B cell (primary cell): ENCODE measurements at regions of chr2 and their contacts with region 1.

Region 1: DNA sequence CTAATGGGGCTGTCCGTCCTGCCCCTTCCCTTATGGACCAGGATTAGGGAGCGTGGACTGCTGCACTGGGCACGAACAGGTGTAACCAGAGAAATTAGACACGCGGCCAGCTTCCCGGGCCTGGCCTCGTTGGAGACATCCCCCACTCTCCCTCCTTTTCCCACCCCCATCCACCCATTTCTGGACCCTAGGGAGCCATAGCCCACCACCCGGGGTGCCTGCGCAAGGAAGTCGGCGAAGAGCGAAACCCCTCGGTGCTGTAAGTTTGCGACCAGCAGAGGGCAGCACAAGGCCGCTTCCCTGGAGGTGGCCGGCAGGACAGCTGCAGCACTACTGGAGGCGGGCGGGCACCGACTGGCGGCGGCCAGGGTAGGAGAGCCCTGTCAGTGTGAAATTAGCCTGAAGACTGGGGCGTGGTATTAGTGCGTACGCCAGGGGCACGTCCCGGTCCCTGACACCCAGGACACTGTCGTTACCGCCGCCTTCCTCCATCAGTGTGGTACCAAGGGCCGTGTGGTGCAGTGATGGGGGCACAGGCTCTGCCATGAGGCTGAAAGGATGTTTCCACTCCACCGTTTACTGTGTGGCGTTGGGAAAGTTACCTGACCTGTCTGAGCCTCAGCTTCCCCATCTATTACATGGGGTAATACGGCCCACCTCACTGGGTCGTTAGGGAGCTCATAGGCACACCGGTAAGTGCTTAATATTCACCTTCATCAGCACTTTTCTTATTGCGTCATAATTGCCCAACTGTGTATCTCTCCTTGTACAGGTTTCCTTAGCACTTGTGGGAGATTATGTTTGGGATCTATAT is 36.0 kb upstream of the CD207 start:
- DNase-seq: peak; percentile 77
- ATAC-seq: peak; percentile 75
- H3K4me3 ChIP-seq: no peak overlapping the region
- H3K4me3 Mint-ChIP-seq: no peak overlapping the region
- H3K27ac ChIP-seq: no peak overlapping the region
- H3K27ac Mint-ChIP-seq: no peak overlapping the region
- H3K4me1 ChIP-seq: peaks cover 8 to 13% of the 10 kb centered on the region in 2 donors
- H3K4me1 Mint-ChIP-seq: peaks cover 6% of the 10 kb centered on the region
- H3K27me3 ChIP-seq: peaks cover 0 to 61% (median 19%) of the 10 kb centered on the region in 4 experiments
- H3K27me3 Mint-ChIP-seq: peaks cover 50% of the 10 kb centered on the region
- CTCF ChIP-seq: peak; percentile 79

Region 2: DNA sequence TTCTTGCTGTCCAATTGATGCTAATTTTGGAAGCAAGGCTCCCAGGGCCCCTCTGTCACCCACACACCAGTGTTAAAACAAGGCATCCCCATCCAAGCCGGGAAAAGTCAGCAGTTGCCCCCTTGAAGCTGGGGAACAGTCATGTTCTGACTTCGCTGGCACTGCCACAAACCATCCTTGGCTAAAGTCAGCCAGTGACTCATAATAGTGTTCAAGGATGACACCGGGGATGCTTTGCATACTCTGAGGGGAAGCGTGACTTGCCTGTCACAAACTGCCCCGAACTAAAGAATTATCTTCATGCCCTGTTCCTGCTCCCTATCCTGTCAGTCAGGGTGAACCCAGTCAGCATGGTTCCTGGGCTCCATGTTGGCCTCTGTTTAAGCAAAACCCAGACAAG is 355.0 kb before region 1 on chr2:
- CTCF ChIA-PET with region 1: no interaction called
- POLR2A ChIA-PET with region 1: no interaction called
- intact Hi-C with region 1: no loop called
- DNase-seq: peak; percentile 27
- ATAC-seq: peak; percentile 71
- H3K4me3 ChIP-seq: no peak overlapping the region
- H3K4me3 Mint-ChIP-seq: peak overlapping the region; percentile 55
- H3K27ac ChIP-seq: no peak overlapping the region
- H3K27ac Mint-ChIP-seq: no peak overlapping the region
- H3K4me1 ChIP-seq: peaks cover 0 to 13% of the 10 kb centered on the region in 2 donors
- H3K4me1 Mint-ChIP-seq: peaks cover 17% of the 10 kb centered on the region
- H3K27me3 ChIP-seq: no peaks in the 10 kb centered on the region
- H3K27me3 Mint-ChIP-seq: no peaks in the 10 kb centered on the region
- CTCF ChIP-seq: no peak

Region 3: DNA sequence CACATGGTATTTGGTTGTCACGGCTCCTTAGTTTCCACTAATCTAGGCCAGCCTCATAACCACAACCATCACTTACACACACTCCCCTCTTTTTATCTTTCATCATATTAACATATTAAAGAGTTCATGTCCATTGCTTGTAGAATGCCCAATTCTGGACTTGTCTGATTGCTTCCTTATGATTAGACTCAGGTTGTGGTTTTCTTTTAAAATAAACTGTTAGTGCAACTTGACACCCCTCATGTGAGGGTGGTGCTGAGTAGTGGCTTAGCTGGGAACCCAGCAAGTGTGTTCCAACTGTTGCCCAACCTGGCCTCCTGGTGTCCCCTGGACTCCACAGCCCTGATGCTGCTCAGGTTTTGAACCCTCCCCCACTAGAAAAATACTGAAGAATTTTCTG is 15.9 kb before region 1 on chr2:
- CTCF ChIA-PET with region 1: interaction called, 29 read pairs
- POLR2A ChIA-PET with region 1: no interaction called
- intact Hi-C with region 1: no loop called
- DNase-seq: no peak
- ATAC-seq: no peak
- H3K4me3 ChIP-seq: no peak overlapping the region
- H3K4me3 Mint-ChIP-seq: no peak overlapping the region
- H3K27ac ChIP-seq: no peak overlapping the region
- H3K27ac Mint-ChIP-seq: no peak overlapping the region
- H3K4me1 ChIP-seq: no peaks in the 10 kb centered on the region
- H3K4me1 Mint-ChIP-seq: no peaks in the 10 kb centered on the region
- H3K27me3 ChIP-seq: peaks cover 0 to 8% (median 2%) of the 10 kb centered on the region in 4 experiments
- H3K27me3 Mint-ChIP-seq: peaks cover 29% of the 10 kb centered on the region
- CTCF ChIP-seq: no peak

Region 4: GRCh38 chr2:70887550-70888246 is 16.1 kb after region 1 on chr2:
- CTCF ChIA-PET with region 1: interaction called, 14 read pairs
- POLR2A ChIA-PET with region 1: interaction called, 3 read pairs
- intact Hi-C with region 1: no loop called
- DNase-seq: no peak
- ATAC-seq: no peak
- H3K4me3 ChIP-seq: peak overlapping the region in 4 of 5 experiments; percentile 8 to 43 (median 35)
- H3K4me3 Mint-ChIP-seq: peak overlapping the region; percentile 67
- H3K27ac ChIP-seq: no peak overlapping the region
- H3K27ac Mint-ChIP-seq: peak overlapping the region; percentile 37
- H3K4me1 ChIP-seq: peaks cover 31 to 34% of the 10 kb centered on the region in 2 donors
- H3K4me1 Mint-ChIP-seq: peaks cover 31% of the 10 kb centered on the region
- H3K27me3 ChIP-seq: peaks cover 0 to 71% (median 58%) of the 10 kb centered on the region in 4 experiments
- H3K27me3 Mint-ChIP-seq: peaks cover 85% of the 10 kb centered on the region
- CTCF ChIP-seq: no peak

Region 5: DNA sequence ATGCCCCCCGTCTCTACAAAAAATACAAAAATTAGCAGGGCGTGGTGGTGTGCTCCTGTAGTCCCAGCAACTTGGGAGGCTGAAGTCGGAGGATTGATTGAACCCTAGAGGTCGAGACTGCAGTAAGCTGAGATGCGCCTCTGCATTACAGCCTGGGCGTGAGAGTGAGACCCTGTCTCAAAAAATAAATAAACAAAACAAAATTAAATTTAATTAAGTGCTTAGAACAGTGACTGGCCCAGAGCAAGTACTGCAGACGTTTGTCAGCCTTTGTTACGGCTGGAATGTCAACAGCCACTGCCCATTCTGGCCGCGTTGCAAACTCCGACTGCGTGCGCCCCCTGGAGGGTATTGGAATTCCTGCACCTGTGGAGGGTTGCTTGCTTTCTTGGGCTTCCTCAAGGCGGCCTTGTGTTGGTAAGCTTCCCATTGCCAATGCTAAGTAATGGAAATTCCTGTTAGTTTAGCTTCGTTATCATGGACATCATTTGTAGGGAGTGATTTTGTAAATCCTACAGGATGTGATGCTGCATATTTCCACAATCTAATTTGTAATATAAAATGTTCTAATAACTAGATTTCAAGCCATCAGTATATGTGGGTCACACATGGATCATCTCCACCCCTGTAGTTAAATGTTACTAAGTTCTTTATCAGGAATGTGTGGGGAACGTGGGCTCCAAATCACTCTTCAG is 48.2 kb after region 1 on chr2:
- CTCF ChIA-PET with region 1: interaction called, 6 read pairs
- POLR2A ChIA-PET with region 1: no interaction called
- intact Hi-C with region 1: loop called (anchors 2 kb)
- DNase-seq: peak; percentile 56
- ATAC-seq: peak; percentile 39
- H3K4me3 ChIP-seq: no peak overlapping the region
- H3K4me3 Mint-ChIP-seq: no peak overlapping the region
- H3K27ac ChIP-seq: no peak overlapping the region
- H3K27ac Mint-ChIP-seq: no peak overlapping the region
- H3K4me1 ChIP-seq: no peaks in the 10 kb centered on the region
- H3K4me1 Mint-ChIP-seq: no peaks in the 10 kb centered on the region
- H3K27me3 ChIP-seq: peaks cover 0 to 24% (median 2%) of the 10 kb centered on the region in 4 experiments
- H3K27me3 Mint-ChIP-seq: peaks cover 50% of the 10 kb centered on the region
- CTCF ChIP-seq: peak; percentile 75

Region 6: GRCh38 chr2:70948337-70949003 is 76.9 kb after region 1 on chr2:
- CTCF ChIA-PET with region 1: interaction called, 51 read pairs
- POLR2A ChIA-PET with region 1: no interaction called
- intact Hi-C with region 1: loop called (anchors 1 kb)
- DNase-seq: peak; percentile 83
- ATAC-seq: peak; percentile 99
- H3K4me3 ChIP-seq: peak overlapping the region in 3 of 5 experiments; percentile 30 to 41 (median 39)
- H3K4me3 Mint-ChIP-seq: peak overlapping the region; percentile 86
- H3K27ac ChIP-seq: no peak overlapping the region
- H3K27ac Mint-ChIP-seq: no peak overlapping the region
- H3K4me1 ChIP-seq: peaks cover 13 to 14% of the 10 kb centered on the region in 2 donors
- H3K4me1 Mint-ChIP-seq: peaks cover 11% of the 10 kb centered on the region
- H3K27me3 ChIP-seq: peaks cover 0 to 20% (median 11%) of the 10 kb centered on the region in 4 experiments
- H3K27me3 Mint-ChIP-seq: peaks cover 25% of the 10 kb centered on the region
- CTCF ChIP-seq: peak; percentile 84

Region 7: DNA sequence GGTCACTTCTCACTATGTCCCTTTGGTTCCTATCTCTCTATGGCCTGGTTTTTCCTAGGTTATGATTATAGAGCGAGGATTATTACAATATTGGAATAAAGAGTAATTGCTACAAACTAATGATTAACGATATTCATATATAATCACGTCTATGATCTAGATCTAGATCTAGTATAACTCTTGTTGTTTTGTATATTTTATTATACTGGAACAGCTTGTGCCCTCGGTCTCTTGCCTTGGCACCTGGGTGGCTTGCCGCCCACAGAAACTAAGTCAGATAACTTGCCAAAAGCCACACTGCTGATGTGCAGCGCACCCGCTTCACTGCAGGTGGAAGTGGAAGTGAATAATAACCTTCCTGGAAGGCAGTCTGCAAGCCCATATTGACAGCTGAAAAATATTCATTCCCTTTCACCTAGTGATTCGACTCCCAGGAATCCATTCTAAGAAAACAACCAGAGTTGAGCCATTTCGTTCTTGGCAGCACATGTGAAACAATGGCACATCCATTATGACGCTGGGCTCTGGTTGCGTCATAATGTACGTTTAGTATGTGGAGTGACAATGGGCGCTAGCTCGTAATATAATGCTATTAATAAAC is 106.1 kb after region 1 on chr2:
- CTCF ChIA-PET with region 1: interaction called, 4 read pairs
- POLR2A ChIA-PET with region 1: no interaction called
- intact Hi-C with region 1: loop called (anchors 1 kb)
- DNase-seq: peak; percentile 57
- ATAC-seq: no peak
- H3K4me3 ChIP-seq: peak overlapping the region; percentile 52 to 84 (median 64)
- H3K4me3 Mint-ChIP-seq: peak overlapping the region; percentile 95
- H3K27ac ChIP-seq: peak overlapping the region; percentile 43 to 79
- H3K27ac Mint-ChIP-seq: peak overlapping the region; percentile 93
- H3K4me1 ChIP-seq: peaks cover 16 to 22% of the 10 kb centered on the region in 2 donors
- H3K4me1 Mint-ChIP-seq: peaks cover 22% of the 10 kb centered on the region
- H3K27me3 ChIP-seq: no peaks in the 10 kb centered on the region
- H3K27me3 Mint-ChIP-seq: peaks cover 15% of the 10 kb centered on the region
- CTCF ChIP-seq: no peak